ENCODE measurements at regions of chrX and their contacts with region 1.

Region 1: GRCh38 chrX:19904778-19905367 is 17.5 kb upstream of the SH3KBP1 start:
- DNase-seq: peak; percentile 22 to 72
- H3K4me3 ChIP-seq: no peak overlapping the region
- H3K27ac ChIP-seq: no peak overlapping the region
- H3K4me1 ChIP-seq: peaks cover 8% of the 10 kb centered on the region
- H3K27me3 ChIP-seq: no peaks in the 10 kb centered on the region
- CTCF ChIP-seq: peak; percentile 73

Region 2: DNA sequence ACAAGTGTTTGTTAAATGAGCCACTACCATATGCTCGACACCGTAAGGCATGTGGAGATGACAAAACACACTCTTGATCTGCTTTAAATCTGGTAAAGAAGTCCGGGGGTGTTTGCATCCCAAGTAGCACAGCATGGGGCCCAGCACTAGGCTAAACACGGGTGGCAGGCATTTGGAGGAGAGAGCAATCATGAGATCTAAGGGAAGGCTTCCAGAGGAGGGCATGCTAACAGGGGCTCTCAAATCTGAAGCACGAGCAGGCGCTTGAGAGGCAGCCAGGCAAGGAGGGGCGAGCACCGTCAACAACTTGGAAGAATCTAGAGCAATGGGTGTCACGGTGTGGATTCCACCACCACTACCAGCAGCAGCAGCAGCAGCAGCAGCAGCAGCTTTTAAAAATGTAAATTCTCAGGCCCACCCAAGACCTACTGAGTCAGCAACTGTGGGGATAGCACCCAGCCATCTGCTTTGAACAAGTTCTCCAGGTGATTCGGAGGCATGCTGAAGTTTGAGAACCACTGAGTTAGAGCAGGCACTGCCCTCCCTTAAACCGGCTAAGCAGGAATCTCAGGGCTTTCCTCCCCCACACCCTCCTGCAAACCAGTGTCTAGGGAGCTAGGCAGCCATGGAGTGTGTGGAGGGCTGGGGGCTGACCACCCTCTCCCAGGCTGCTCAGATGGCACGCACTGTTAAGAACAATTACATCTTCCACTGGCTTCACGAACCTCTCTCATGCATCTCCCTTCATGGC is 319.4 kb before region 1 on chrX:
- CTCF ChIA-PET with region 1: no interaction called
- POLR2A ChIA-PET with region 1: interaction called, 41 read pairs
- intact Hi-C with region 1: no loop called
- DNase-seq: peak in 1 of 2 experiments; percentile 5
- H3K4me3 ChIP-seq: no peak overlapping the region
- H3K27ac ChIP-seq: no peak overlapping the region
- H3K4me1 ChIP-seq: no peaks in the 10 kb centered on the region
- H3K27me3 ChIP-seq: no peaks in the 10 kb centered on the region
- CTCF ChIP-seq: no peak

Region 3: DNA sequence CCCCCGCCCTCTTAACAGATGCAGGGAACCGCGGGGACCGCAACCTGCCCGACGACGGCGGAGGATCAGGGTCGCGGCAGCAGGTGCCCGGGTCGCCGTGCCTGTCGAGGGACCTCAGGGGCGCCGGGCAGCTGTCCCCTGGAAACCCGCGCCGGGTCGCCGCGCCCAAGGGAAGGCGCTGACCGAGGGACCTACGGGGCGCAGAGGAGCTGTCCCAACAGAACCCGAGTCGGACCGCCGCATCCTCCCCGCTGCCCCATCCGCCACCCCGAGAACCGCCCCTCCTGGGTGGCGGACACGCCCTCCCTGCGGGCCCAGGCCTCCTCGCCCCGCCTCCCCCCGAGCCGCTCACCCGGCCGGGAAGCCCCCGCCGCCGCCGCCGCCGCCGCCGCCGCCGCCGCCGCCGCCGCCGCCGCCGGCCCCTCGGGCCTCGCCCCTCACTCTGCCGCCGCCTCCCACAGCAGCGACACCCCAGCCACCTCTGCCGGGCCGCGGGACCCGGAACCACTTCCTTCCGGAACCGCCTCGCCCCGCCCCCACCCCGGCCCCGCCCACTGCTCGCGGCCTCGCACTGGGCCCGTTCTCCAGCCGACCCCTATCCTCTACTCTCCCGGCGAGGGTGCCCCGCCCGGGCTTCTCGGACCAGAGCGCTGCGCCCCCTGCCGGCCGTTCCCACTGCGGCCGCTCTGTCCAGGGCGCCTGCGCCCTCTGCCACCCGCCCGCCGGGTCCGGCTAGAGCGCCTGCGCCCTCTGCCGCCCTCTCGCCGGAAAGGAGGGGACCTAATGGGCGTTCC is 85.9 kb after region 1 on chrX and contains the start of gene BCLAF3:
- CTCF ChIA-PET with region 1: no interaction called
- POLR2A ChIA-PET with region 1: no interaction called
- intact Hi-C with region 1: loop called (anchors 5 kb)
- DNase-seq: peak; percentile 73 to 93
- H3K4me3 ChIP-seq: peak within 1 kb of the TSS; percentile 80
- H3K27ac ChIP-seq: 0 out of 2 replicates have a peak within 1 kb of the TSS, but pooled peaks have one; percentile 21
- H3K4me1 ChIP-seq: peaks cover 6% of the 10 kb centered on the region; the same call in 1 of the 2 replicates
- H3K27me3 ChIP-seq: no peaks in the 10 kb centered on the region
- CTCF ChIP-seq: peak; percentile 78
- total RNA-seq, gene BCLAF3: 6.7 and 7.9 TPM in 2 replicates

Region 4: GRCh38 chrX:20116579-20117240 is 211.8 kb after region 1 on chrX and contains the start of gene MAP7D2:
- CTCF ChIA-PET with region 1: no interaction called
- POLR2A ChIA-PET with region 1: no interaction called
- intact Hi-C with region 1: loop called (anchors 10 kb)
- DNase-seq: no peak
- H3K4me3 ChIP-seq: no peak within 1 kb of the TSS
- H3K27ac ChIP-seq: peak within 1 kb of the TSS; percentile 58
- H3K4me1 ChIP-seq: peaks cover 14% of the 10 kb centered on the region
- H3K27me3 ChIP-seq: no peaks in the 10 kb centered on the region
- CTCF ChIP-seq: no peak
- total RNA-seq, gene MAP7D2: not detected in 2 replicates

Region 5: DNA sequence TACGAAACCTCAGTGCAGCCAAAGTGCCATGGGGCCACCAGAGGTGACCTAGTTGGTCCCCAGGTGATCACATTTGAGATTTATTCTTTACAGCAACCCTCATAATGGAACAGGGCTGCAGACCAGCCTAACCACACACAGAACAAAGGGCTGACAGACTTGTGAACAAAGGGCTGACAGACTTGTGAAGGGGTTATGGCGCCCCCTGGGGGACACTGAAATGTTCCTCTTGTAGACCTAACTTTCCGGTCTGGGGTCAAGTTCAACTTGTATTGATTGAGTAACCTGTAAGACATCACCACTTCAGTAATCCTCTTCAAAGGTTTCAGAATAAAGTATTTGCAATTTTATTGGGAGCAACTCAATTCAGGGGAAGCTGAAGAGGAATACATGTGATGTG is 537.7 kb after region 1 on chrX:
- CTCF ChIA-PET with region 1: no interaction called
- POLR2A ChIA-PET with region 1: no interaction called
- intact Hi-C with region 1: loop called (anchors 10 kb)
- DNase-seq: peak; percentile 60 to 74
- H3K4me3 ChIP-seq: no peak overlapping the region
- H3K27ac ChIP-seq: no peak overlapping the region
- H3K4me1 ChIP-seq: peaks cover 7% of the 10 kb centered on the region; the same call in 1 of the 2 replicates
- H3K27me3 ChIP-seq: no peaks in the 10 kb centered on the region
- CTCF ChIP-seq: peak; percentile 79